B cell (primary cell): ENCODE measurements at regions of chr2 and their contacts with region 1.

Region 1: DNA sequence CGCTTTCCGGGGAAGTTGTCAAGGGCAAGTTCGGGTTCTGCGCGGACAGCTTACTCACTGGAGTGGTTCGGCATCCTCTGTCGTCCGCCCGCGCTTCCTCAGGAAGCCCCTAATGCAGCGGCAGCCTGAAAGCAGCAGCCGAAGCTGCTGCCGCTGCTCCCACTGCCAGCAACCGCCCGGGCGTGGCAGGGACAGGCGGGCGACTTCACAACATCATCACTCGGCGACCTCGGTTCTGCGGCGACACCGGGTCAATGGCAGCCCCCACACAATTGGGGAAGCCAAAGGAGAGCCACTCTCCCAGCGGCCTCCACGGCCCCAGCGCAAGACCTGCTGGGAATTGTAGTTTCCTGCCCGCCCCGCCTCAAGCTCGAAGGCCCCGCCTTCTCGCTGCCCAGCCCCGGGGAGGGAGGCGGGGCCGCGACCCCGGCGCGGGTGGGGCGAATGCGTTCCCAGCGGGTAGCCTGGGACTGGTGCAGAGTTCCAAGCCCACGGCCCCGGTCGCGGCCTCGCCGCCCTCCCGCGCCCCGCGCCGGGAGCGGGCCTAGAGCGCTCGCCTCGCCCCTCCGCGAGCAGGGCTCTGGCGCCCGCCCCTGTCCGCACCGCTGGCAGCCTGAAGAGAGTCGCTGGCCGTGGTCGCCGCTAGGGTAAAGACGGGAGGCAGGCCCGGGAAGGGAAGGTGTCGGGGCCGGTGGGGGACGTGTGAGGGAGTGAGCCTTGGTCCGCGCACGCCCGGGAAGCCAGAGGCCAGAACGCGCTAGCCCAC is at the starts of genes STRADB and TRAK2:
- DNase-seq: peak; percentile 98
- ATAC-seq: peak; percentile 92
- H3K4me3 ChIP-seq: peak within 1 kb of the TSS; percentile 61 to 94 (median 69)
- H3K4me3 Mint-ChIP-seq: peak within 1 kb of the TSS; percentile 97
- H3K27ac ChIP-seq: peak within 1 kb of the TSS; percentile 54 to 88
- H3K27ac Mint-ChIP-seq: peak within 1 kb of the TSS; percentile 96
- H3K4me1 ChIP-seq: peaks cover 39 to 43% of the 10 kb centered on the region in 2 donors
- H3K4me1 Mint-ChIP-seq: peaks cover 41% of the 10 kb centered on the region
- H3K27me3 ChIP-seq: no peaks in the 10 kb centered on the region
- H3K27me3 Mint-ChIP-seq: no peaks in the 10 kb centered on the region
- CTCF ChIP-seq: peak; percentile 48
- total RNA-seq, gene STRADB: 17.5 and 20.6 TPM in 2 replicates
- total RNA-seq, gene TRAK2: 21.6 and 24.5 TPM in 2 replicates

Region 2: GRCh38 chr2:199955339-199956261 is 1495.9 kb before region 1 on chr2 and contains the starts of genes MAIP1 and TYW5:
- CTCF ChIA-PET with region 1: no interaction called
- POLR2A ChIA-PET with region 1: interaction called, 4 read pairs
- intact Hi-C with region 1: loop called (anchors 5 kb)
- DNase-seq: peak; percentile 88
- ATAC-seq: peak; percentile 87
- H3K4me3 ChIP-seq: peak within 1 kb of the TSS; percentile 70 to 97 (median 75)
- H3K4me3 Mint-ChIP-seq: peak within 1 kb of the TSS; percentile 98
- H3K27ac ChIP-seq: peak within 1 kb of the TSS; percentile 59 to 85
- H3K27ac Mint-ChIP-seq: peak within 1 kb of the TSS; percentile 93
- H3K4me1 ChIP-seq: peaks cover 24 to 27% of the 10 kb centered on the region in 2 donors
- H3K4me1 Mint-ChIP-seq: peaks cover 52% of the 10 kb centered on the region
- H3K27me3 ChIP-seq: no peaks in the 10 kb centered on the region
- H3K27me3 Mint-ChIP-seq: no peaks in the 10 kb centered on the region
- CTCF ChIP-seq: no peak
- total RNA-seq, gene MAIP1: 15.7 and 15.8 TPM in 2 replicates
- total RNA-seq, gene TYW5: 15.0 and 15.4 TPM in 2 replicates

Region 3: DNA sequence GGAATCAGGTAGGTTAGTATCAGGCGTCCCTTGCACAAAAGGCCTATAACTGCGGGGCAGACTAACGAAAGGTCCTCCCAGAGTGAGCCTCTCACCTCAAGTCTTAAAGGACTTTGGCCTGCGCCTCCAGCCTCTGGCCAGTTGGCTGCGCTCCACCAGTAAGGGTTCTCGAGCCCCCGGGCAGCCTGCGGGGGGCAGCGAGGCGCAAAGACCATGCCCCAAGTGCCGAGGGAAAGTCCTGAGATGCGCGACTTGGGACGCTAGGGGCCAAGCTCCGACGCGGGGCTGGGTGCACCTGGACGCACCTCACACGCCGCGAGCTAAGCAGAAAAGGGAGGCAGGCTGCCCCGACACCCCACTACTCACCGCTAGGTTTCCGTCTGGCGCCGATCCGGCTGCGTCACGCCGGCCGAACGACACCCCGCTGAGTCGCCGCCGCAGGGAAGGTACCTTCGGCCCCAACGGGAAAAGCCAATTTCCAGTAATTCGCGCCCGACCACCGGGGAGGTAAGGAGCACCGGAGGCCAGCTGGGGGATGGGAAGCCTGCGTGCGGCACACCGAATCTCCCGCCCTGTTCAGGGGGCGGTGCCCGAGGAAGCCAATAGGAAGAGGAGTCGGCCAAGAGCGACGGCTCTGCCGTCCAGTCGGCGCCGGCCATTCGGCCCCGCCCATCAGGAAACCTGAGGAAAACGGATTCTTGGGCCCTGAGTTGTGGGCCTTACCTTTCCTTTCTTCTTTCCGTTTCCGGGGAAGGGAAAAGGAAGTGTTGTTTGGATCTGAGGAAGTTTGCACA is 488.2 kb before region 1 on chr2 and contains the start of gene ORC2:
- CTCF ChIA-PET with region 1: no interaction called
- POLR2A ChIA-PET with region 1: no interaction called
- intact Hi-C with region 1: loop called (anchors 2 kb)
- DNase-seq: peak; percentile 97
- ATAC-seq: peak; percentile 92
- H3K4me3 ChIP-seq: peak within 1 kb of the TSS; percentile 77 to 97 (median 90)
- H3K4me3 Mint-ChIP-seq: peak within 1 kb of the TSS; percentile 92
- H3K27ac ChIP-seq: peak within 1 kb of the TSS; percentile 90 to 92
- H3K27ac Mint-ChIP-seq: peak within 1 kb of the TSS; percentile 98
- H3K4me1 ChIP-seq: peaks cover 28 to 30% of the 10 kb centered on the region in 2 donors
- H3K4me1 Mint-ChIP-seq: peaks cover 53% of the 10 kb centered on the region
- H3K27me3 ChIP-seq: no peaks in the 10 kb centered on the region
- H3K27me3 Mint-ChIP-seq: no peaks in the 10 kb centered on the region
- CTCF ChIP-seq: peak; percentile 77
- total RNA-seq, gene ORC2: 50.6 and 63.6 TPM in 2 replicates

Region 4: DNA sequence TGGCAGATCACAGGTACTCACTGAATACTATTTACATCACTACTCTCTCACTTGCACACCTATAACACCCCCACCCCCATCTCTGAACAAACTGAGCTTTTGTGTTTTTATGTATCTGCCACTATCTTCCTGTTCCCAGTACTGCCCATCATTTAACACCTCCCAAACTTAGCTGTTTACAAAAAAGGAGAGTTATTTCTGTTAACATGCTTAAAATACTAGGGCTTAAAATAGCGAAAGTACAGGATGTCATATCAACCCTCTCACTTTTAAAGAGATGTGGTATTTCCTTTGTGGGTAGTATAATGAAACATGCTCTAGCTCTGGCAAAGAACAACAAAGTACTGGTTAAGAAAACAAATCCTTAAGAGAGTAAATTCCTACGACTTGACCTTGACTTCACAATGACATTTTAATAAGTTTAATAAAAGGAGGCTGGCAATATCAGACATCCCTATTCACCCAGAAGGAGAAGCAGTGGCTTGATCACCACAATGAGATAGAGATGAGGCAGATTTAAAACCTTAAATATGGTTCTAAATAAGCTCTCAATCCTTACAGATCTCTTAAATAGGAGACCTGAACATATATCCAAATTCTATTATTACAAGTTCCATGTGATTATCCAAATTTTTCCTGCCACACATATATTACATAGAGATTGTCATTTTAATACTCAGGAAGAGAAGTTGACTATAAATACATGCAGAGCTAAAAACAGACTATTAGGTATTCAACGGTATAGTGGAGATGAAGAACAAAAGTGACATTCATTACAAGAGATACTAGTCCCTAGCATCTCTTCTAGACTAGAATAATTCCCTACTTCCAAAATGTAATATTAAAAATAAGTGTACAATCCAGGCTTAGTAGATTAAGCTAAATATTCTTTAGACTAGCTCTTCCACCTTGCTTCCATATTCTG is 37.1 kb before region 1 on chr2:
- CTCF ChIA-PET with region 1: interaction called, 3 read pairs
- POLR2A ChIA-PET with region 1: no interaction called
- intact Hi-C with region 1: loop called (anchors 5 kb)
- DNase-seq: peak; percentile 38
- ATAC-seq: peak; percentile 28
- H3K4me3 ChIP-seq: peak overlapping the region in 4 of 5 experiments; percentile 16 to 60 (median 38)
- H3K4me3 Mint-ChIP-seq: no peak overlapping the region
- H3K27ac ChIP-seq: peak overlapping the region; percentile 82 to 84
- H3K27ac Mint-ChIP-seq: no peak overlapping the region
- H3K4me1 ChIP-seq: peaks cover 45 to 68% of the 10 kb centered on the region in 2 donors
- H3K4me1 Mint-ChIP-seq: peaks cover 10% of the 10 kb centered on the region
- H3K27me3 ChIP-seq: no peaks in the 10 kb centered on the region
- H3K27me3 Mint-ChIP-seq: no peaks in the 10 kb centered on the region
- CTCF ChIP-seq: no peak

Region 5: DNA sequence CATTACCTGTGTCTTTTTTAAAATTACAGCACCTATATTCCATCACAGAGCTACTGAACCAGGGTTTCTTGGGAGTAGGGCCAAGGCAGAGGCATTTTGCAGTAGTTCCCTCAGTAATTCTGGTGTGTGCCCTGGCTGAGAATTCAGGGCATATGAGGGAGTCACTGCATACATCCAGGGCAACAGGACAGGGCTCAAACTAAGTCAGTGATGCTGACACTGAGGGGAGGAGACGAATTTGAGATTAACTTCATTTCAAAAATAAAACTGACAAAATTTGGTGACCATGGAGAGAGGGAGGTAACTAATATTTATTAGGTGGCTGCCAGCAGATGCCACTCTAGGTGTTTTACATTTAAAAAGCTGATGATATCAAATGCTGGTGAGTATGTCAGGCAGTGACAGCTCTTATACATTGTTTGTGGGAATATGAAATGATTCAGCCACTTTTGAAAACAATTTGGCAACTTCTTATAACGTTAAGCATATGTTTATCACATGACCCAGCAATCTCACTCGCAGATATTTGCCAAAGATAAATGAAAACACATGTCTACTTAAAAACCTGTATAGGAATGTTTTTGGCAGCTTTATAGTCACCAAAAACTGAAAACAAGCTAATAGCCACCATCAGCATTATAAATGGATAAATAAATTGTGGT is 20.4 kb after region 1 on chr2:
- CTCF ChIA-PET with region 1: no interaction called
- POLR2A ChIA-PET with region 1: no interaction called
- intact Hi-C with region 1: no loop called
- DNase-seq: no peak
- ATAC-seq: no peak
- H3K4me3 ChIP-seq: no peak overlapping the region
- H3K4me3 Mint-ChIP-seq: no peak overlapping the region
- H3K27ac ChIP-seq: no peak overlapping the region
- H3K27ac Mint-ChIP-seq: no peak overlapping the region
- H3K4me1 ChIP-seq: no peaks in the 10 kb centered on the region
- H3K4me1 Mint-ChIP-seq: no peaks in the 10 kb centered on the region
- H3K27me3 ChIP-seq: no peaks in the 10 kb centered on the region
- H3K27me3 Mint-ChIP-seq: no peaks in the 10 kb centered on the region
- CTCF ChIP-seq: no peak

Region 6: GRCh38 chr2:201780674-201781581 is 329.5 kb after region 1 on chr2 and contains the start of gene ALS2:
- CTCF ChIA-PET with region 1: interaction called, 4 read pairs
- POLR2A ChIA-PET with region 1: interaction called, 8 read pairs
- intact Hi-C with region 1: loop called (anchors 1 kb)
- DNase-seq: peak; percentile 97
- ATAC-seq: peak; percentile 92
- H3K4me3 ChIP-seq: peak within 1 kb of the TSS; percentile 80 to 99 (median 88)
- H3K4me3 Mint-ChIP-seq: peak within 1 kb of the TSS; percentile 98
- H3K27ac ChIP-seq: peak within 1 kb of the TSS; percentile 77 to 84
- H3K27ac Mint-ChIP-seq: peak within 1 kb of the TSS; percentile 94
- H3K4me1 ChIP-seq: peaks cover 13 to 15% of the 10 kb centered on the region in 2 donors
- H3K4me1 Mint-ChIP-seq: peaks cover 16% of the 10 kb centered on the region
- H3K27me3 ChIP-seq: peaks cover 0 to 12% (median 0%) of the 10 kb centered on the region in 4 experiments
- H3K27me3 Mint-ChIP-seq: peaks cover 10% of the 10 kb centered on the region
- CTCF ChIP-seq: no peak
- total RNA-seq, gene ALS2: 15.8 and 16.7 TPM in 2 replicates

Region 7: DNA sequence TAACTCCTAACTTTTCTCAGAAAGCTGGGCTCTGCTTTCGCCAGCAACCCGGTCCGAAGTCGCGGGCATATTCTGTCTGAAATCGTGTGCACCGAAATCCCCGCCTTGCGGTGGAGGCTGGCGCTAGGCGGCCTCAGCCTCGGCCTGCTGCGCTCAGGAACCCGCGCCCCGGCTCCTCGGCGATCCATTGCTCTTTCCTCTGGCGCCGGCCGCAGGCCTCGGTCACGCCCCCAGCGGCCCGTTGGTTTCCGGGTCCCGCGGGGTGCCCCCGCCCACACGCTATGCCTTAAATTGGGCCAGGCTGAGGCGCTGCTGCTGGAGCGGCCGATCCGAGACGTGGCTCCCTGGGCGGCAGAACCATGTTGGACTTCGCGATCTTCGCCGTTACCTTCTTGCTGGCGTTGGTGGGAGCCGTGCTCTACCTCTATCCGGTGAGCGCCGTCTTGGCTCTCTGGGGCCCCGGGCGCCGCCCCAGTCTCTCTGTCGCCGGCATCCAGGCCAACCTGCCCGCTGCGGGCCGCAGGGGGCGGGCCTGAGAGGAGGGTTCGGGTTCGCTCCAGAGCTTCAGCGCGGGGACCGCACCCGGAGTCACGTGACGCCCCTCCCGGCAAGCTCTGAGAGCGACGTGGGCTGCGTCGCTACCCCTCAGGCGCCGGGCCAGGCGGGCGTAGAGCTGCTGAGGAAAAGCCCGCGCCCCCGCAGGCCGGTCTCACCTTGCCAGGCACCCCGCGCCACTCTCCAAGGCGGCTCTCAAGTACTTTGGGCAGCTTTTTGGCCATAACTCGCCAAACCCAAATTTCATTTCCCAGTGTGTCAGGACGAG is 1787.4 kb after region 1 on chr2 and contains the start of gene CYP20A1:
- CTCF ChIA-PET with region 1: no interaction called
- POLR2A ChIA-PET with region 1: no interaction called
- intact Hi-C with region 1: loop called (anchors 5 kb)
- DNase-seq: peak; percentile 98
- ATAC-seq: peak; percentile 86
- H3K4me3 ChIP-seq: peak within 1 kb of the TSS; percentile 63 to 98 (median 95)
- H3K4me3 Mint-ChIP-seq: peak within 1 kb of the TSS; percentile 96
- H3K27ac ChIP-seq: peak within 1 kb of the TSS; percentile 88 to 94
- H3K27ac Mint-ChIP-seq: peak within 1 kb of the TSS; percentile 98
- H3K4me1 ChIP-seq: peaks cover 17 to 19% of the 10 kb centered on the region in 2 donors
- H3K4me1 Mint-ChIP-seq: peaks cover 31% of the 10 kb centered on the region
- H3K27me3 ChIP-seq: no peaks in the 10 kb centered on the region
- H3K27me3 Mint-ChIP-seq: no peaks in the 10 kb centered on the region
- CTCF ChIP-seq: no peak
- total RNA-seq, gene CYP20A1: 38.5 and 40.8 TPM in 2 replicates